ENCODE measurements at regions of chr1 and their contacts with region 1.

Region 1: DNA sequence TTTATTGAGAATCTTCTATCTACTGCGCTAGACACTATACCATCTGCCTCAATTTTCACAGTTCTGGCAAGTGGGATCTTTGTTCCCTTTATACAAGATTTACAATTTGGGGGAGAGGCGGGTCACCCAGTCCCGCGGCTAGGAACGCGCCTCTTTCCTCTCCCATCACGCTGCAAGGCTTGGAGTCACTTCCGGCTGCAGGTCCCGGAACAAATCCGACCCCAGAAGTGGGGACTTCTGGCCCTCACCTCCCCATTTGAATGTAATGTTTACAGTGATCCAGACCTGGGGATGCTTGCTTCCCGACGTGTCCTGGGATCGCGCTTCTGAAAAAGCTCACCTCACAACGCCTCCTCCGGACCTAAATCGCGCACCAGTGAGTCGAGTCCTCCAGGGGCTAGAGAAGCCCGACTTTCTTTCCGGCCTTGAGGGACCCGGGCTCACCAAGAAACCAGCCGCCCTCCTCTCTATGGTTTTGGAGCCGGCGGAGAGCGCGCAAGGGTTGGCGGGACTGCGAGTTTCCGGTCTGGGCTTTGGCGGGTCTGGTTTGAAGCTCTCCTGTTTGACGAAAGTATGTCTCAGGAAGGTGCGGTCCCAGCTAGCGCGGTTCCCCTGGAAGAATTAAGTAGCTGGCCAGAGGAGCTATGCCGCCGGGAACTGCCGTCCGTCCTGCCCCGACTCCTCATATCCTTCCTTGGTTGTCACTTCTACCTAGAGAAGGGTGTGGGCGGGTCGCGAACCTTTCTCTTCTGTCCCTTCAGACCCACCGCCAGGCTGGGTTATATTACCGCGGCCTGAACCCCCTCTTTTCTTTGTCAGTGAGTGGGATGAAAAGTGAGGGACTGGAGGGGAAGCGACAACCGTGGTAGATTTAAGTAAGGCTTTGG is at the start of gene METTL18:
- DNase-seq: peak; percentile 98
- H3K4me3 ChIP-seq: peak within 1 kb of the TSS; percentile 64 to 81 (median 70)
- H3K27ac ChIP-seq: peak within 1 kb of the TSS; percentile 79 to 87 (median 86)
- H3K4me1 ChIP-seq: peaks cover 16 to 26% (median 20%) of the 10 kb centered on the region in 4 donors
- H3K27me3 ChIP-seq: no peaks in the 10 kb centered on the region
- CTCF ChIP-seq: no peak
- EP300 ChIP-seq: no peak
- POLR2A ChIP-seq: no peak
- total RNA-seq, gene METTL18: 5.6 to 6.8 (median 6.2) TPM

Region 2: DNA sequence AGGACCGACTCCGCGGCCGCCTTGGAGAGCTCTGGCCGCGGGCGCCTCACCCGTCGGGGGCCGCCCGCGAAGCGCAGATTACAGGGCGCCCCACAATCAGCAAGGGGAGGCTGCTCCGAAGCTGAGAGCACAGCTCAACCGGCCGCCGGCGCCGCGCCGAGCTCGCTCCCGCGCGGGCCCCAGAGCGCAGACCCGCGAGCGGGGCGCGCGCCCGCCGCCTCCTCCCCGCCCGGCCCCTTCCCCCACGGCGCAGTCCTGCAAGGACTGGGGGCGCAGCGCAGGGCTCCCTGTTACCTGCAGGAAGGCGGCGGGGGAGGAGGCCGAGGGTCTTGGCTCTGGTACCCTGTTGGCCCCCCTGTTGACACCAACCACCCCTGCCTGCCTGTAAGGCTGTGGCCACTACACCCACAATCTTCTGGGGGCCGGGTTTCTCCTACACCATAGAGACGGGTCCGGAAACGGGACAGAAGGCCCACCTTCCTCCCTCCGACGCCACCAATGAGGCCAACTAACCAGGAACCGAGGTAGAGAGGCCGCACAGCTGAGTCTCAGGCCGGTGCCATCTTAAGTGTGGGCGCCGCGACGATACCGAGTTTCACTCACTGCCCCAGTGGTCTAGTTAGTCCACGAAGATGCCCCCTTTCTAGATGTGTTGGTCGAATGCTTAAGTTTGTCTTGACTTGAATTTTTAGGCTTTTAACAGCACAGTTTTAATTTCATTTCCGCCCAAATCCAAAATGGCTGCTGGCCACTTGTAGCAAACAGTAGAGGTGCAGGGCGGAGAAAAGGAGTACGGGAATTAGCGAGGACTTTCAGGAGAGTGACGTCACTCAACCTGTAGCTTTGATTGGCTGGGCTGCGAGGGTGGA is 99.0 kb after region 1 on chr1 and contains the start of gene SCYL3:
- intact Hi-C with region 1: loop called (anchors 5 kb)
- DNase-seq: peak; percentile 98
- H3K4me3 ChIP-seq: peak within 1 kb of the TSS; percentile 89 to 100 (median 96)
- H3K27ac ChIP-seq: peak within 1 kb of the TSS; percentile 93 to 99 (median 98)
- H3K4me1 ChIP-seq: peaks cover 11 to 37% (median 21%) of the 10 kb centered on the region in 4 donors
- H3K27me3 ChIP-seq: peaks cover 0 to 7% (median 1%) of the 10 kb centered on the region in 4 donors
- CTCF ChIP-seq: peak in 1 of 3 experiments; percentile 1
- EP300 ChIP-seq: no peak
- POLR2A ChIP-seq: no peak
- total RNA-seq, gene SCYL3: 10.2 to 11.8 (median 10.3) TPM

Measured in esophagus muscularis mucosa (tissue), 4 donors.